Activated T-helper 2 cell treated with anti-CD3 and anti-CD28 coated beads, Interferon-gamma antibody, Interleukin-2, Interleukin-4, amounts not matched to agents 10 μg/mL and 5 μg/mL and 100 μg/mL, durations not matched to agents 14 hours and 24 hours and 36 hours (primary cell): ENCODE measurements at regions of chr15 and their contacts with region 1.

Region 1: GRCh38 chr15:38563723-38564519 is 693 bp downstream of the RASGRP1 start:
- DNase-seq: peak; percentile 82
- H3K4me3 Mint-ChIP-seq: peak overlapping the region; percentile 97
- H3K27ac Mint-ChIP-seq: peak overlapping the region; percentile 98
- H3K4me1 Mint-ChIP-seq: peaks cover 58% of the 10 kb centered on the region
- H3K27me3 Mint-ChIP-seq: no peaks in the 10 kb centered on the region

Region 2: DNA sequence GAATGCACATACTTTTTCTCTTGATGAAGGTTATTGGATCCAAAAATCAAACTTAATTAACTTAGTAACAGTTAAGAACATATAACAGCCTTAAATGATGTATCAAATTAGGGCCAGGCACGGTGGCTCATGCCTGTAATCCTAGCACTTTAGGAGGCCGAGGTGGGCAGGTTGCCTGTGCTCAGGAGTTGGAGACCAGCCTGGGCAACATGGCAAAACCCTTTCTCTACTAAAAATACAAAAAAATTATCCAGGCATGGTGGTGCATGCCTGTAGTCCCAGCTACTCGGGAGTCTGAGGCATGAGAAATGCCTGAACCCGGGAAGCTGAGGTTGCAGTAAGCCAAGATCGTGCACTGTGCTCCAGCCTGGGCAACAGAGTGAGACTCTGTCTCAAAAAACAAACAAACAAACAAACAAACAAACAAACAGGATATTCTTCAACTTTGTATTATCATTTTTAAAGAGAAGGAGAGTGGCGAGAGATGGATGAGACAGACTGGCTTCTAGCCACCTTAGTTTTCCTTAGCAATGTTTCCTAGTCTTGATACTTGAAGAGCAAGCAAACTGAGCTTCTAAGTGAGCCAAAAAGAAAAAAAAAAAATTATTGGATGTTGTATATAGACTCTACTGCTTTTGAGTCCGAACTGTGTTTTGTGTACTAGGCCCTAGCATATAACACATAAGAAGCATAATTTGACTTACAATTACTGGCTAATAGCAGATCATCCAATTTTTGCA is 297.5 kb before region 1 on chr15:
- intact Hi-C with region 1: no loop called
- DNase-seq: no peak
- H3K4me3 Mint-ChIP-seq: no peak overlapping the region
- H3K27ac Mint-ChIP-seq: no peak overlapping the region
- H3K4me1 Mint-ChIP-seq: no peaks in the 10 kb centered on the region
- H3K27me3 Mint-ChIP-seq: peaks cover 3% of the 10 kb centered on the region

Region 3: DNA sequence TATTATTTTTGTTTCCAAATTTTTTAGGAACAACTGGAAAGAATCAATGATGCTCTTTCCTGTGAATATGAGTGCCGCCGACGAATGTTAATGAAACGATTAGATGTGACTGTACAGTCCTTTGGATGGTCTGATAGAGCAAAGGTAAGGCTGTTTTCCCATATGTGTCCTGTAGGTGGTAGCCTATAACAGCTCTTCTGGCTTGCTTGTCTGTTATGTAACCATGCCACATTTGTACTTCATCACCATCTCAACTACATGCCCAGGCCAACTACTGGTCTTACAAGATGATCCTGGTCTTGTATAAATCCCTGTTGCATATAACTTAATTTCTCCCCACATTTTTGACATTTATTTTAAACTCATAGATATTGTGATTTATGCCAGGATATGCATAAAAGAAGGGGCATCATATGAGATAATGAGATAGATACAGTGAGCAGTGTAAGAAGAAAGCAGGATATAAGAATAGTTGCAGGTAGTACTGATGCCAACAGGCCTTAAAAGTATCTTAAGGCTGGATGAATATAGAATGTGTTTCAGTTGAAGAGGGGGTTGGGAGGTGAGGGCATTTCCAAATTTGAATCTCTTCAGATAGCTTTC is 89.7 kb before region 1 on chr15:
- intact Hi-C with region 1: loop called (anchors 5 kb)
- DNase-seq: no peak
- H3K4me3 Mint-ChIP-seq: no peak overlapping the region
- H3K27ac Mint-ChIP-seq: no peak overlapping the region
- H3K4me1 Mint-ChIP-seq: peaks cover 4% of the 10 kb centered on the region
- H3K27me3 Mint-ChIP-seq: no peaks in the 10 kb centered on the region

Region 4: GRCh38 chr15:38508647-38509046 is 55.3 kb before region 1 on chr15:
- intact Hi-C with region 1: loop called (anchors 2 kb)
- DNase-seq: no peak
- H3K4me3 Mint-ChIP-seq: no peak overlapping the region
- H3K27ac Mint-ChIP-seq: peak overlapping the region; percentile 73
- H3K4me1 Mint-ChIP-seq: peaks cover 40% of the 10 kb centered on the region
- H3K27me3 Mint-ChIP-seq: no peaks in the 10 kb centered on the region

Region 5: DNA sequence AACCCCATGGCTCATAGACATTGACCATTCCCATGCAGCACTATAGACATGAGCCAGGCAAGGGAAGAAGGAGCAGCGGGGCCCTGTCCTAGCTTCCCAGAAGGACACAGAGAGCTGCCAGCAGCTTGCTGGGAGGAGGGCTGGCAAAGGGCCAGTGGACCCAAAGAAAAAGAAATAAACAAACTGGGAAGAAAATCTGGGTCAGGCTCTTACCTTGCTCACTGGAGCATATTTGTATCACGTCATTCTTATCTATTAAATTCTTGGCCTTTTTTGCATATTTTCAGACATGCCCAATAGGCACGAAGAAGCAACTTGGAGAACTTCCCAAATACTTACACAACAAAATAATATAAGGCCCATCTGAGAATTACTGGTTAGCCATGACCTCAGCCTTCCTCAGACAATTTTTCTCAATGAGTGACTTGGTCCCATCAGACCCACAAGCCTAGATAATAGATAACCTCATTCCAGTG is 27.7 kb before region 1 on chr15:
- intact Hi-C with region 1: no loop called
- DNase-seq: no peak
- H3K4me3 Mint-ChIP-seq: no peak overlapping the region
- H3K27ac Mint-ChIP-seq: peak overlapping the region; percentile 78
- H3K4me1 Mint-ChIP-seq: peaks cover 90% of the 10 kb centered on the region
- H3K27me3 Mint-ChIP-seq: no peaks in the 10 kb centered on the region

Region 6: DNA sequence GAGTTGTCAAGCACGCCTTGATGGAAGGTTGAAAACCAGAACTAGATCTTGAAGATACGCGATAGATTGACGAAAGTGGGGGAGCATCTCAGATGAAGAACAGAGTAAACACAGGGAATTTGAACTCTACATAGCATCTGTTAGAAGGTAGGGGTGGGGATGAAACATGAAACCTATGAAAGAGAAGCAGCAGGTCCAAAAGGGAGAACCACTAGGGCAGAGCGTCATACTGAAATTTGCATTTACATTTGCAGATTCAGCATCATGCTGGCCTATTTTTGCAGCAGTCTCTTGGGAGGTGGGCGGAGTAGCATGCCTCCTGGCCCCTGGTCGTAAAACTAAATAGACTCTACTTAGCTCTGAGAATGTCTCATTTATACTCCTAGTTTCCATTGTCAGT is 46.8 kb after region 1 on chr15:
- intact Hi-C with region 1: loop called (anchors 1 kb)
- DNase-seq: peak; percentile 38
- H3K4me3 Mint-ChIP-seq: peak overlapping the region; percentile 15
- H3K27ac Mint-ChIP-seq: peak overlapping the region; percentile 96
- H3K4me1 Mint-ChIP-seq: peaks cover 72% of the 10 kb centered on the region
- H3K27me3 Mint-ChIP-seq: no peaks in the 10 kb centered on the region

Region 7: DNA sequence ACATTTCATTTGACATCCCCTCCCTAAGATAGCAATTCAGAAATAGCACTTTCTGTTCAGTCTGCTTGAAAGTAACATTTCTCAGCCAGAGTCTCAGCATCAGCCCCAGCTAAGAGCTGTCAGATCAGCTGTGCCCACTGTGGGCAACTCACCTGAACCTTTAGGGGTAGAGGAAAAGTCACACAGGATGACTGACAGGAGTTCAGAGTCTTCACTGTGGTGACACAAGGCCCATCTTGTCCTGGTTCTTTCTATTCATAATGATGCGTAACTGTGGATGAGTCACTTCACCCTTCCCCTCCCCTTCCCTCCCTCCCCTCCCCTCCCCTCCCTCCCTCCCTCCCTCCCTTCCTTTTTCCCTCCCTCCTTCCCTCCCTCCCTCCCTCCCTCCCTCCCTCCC is 96.8 kb after region 1 on chr15:
- intact Hi-C with region 1: loop called (anchors 2 kb)
- DNase-seq: no peak
- H3K4me3 Mint-ChIP-seq: peak overlapping the region; percentile 72
- H3K27ac Mint-ChIP-seq: peak overlapping the region; percentile 79
- H3K4me1 Mint-ChIP-seq: peaks cover 63% of the 10 kb centered on the region
- H3K27me3 Mint-ChIP-seq: no peaks in the 10 kb centered on the region

Region 8: GRCh38 chr15:38683382-38684242 is 119.7 kb after region 1 on chr15:
- intact Hi-C with region 1: loop called (anchors 1 kb)
- DNase-seq: peak; percentile 62
- H3K4me3 Mint-ChIP-seq: no peak overlapping the region
- H3K27ac Mint-ChIP-seq: peak overlapping the region; percentile 89
- H3K4me1 Mint-ChIP-seq: peaks cover 66% of the 10 kb centered on the region
- H3K27me3 Mint-ChIP-seq: no peaks in the 10 kb centered on the region